AG04450 (cell line): ENCODE measurements at regions of chr12 and their contacts with region 1.

Region 1: DNA sequence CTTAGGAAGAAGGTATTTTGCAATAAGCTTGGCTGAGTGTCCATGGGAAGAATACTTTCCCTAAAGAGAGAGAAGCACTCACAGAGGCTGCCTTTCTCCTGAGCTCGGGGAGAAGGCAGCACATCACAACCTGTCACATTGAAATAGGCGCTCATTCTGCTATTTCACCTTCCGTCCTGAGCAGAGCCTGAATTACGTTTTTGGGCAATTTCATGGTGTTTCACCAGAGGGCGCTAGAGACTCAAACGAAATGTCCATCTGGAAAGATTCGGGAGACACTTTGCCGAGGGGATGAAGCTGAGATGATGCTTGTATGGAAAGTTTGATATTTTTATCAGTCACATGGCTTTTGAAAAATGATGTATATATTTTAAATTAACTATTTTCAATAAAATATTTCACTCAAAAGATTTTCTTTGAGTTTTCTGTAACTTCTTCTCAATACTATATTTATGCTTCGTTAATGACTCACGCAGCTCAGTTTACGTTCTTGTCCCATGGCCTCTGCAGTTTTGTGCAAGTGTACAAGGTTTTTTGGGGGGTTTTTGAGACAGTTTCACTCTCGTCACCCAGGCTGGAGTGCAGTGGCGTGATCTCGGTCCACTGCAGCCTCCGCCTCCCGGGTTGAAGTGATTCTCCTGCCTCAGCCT is 17.4 kb upstream of the B4GALNT3 start:
- DNase-seq: peak; percentile 6
- H3K4me3 ChIP-seq: no peak overlapping the region
- H3K27ac ChIP-seq: no peak overlapping the region
- H3K27me3 ChIP-seq: peaks cover under 1% of the 10 kb centered on the region
- CTCF ChIP-seq: peak; percentile 80

Region 2: DNA sequence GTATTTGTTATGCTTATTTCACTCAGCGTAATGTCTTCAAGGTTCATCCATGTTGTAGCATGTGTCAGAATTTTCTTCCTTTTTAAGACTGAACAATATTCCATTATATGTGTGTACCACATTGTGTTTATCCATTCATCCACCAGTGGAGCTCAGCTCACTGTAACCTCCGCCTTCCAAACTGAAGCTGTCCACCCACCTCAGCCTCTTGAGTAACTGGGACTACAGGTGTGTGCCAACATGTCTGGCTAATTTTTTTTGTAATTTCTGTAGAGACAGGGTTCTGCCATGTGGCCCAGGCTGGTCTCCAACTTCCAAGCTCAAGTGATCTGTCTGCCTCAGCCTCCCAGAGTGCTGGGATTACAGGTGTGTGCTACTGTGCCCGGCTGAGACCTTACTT is 19.8 kb before region 1 on chr12:
- CTCF ChIA-PET with region 1: interaction called, 15 read pairs
- POLR2A ChIA-PET with region 1: no interaction called
- DNase-seq: no peak
- H3K4me3 ChIP-seq: no peak overlapping the region
- H3K27ac ChIP-seq: no peak overlapping the region
- H3K27me3 ChIP-seq: no peaks in the 10 kb centered on the region
- CTCF ChIP-seq: no peak

Region 3: DNA sequence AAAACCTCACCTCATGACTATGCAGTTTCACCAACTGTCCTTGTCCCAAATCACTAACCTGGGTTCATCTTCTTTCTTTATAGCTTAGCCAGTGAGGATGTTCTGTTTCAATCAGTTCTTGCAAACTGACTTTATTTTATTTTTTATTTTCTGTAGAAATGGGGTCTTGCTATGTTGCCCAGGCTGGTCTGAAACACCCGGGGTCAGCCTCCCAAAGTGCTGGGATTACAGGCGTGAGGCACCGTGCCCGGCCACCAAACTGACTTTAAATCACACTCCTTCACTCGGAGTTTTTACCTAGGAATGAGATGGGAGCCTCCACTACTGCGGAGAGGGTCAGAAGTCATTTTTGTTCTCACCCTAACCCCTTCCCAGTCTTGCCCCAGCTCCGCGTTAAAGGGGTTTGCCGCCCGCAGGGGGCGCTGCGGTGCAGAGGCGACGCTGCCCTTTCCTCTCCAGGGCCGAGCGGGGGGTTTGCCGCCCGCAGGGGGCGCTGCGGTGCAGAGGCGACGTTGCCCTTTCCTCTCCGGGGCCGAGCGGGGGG is 10.4 kb after region 1 on chr12:
- CTCF ChIA-PET with region 1: interaction called, 58 read pairs
- POLR2A ChIA-PET with region 1: no interaction called
- DNase-seq: no peak
- H3K4me3 ChIP-seq: no peak overlapping the region
- H3K27ac ChIP-seq: no peak overlapping the region
- H3K27me3 ChIP-seq: peaks cover 37% of the 10 kb centered on the region
- CTCF ChIP-seq: peak; percentile 15; the same call in 1 of the 2 replicates

Region 4: DNA sequence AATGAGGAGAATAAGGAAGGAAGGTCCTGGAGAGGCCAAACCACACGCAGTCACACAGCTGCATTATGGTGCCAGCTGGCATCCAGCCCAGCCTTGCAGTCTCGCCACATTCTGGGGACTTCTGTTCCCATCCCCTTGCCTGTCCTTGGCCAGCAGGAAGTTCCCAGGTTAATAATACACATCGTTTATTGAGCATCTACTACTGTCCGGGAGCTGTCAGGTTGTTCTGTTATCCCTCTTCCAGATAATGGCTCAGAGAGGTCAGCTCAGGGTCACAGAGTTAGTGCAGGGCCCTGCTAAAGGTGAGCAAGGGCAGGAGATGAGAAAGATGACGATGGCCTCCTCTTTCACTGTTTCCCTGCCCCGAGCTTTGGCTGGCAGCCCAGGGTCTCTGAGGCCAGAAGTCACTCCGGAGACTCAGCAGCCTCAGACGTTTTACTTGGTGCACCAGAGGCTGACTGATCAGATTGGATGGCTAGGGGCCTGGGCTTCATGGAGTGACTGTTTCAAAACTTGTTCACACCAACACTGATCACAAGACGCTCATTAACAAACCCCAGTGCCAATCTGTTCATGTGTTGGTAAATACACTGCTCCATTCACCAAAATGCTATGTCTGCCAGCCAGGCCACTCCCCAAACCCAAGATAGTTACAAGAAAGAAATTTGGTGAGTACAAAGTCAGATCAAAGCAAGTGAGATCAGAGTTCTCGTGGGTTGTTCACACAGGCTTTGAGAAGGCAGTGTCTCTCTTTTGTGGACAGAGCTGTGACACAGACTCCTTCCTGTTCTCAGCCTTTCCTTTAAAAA is 96.6 kb after region 1 on chr12:
- CTCF ChIA-PET with region 1: interaction called, 36 read pairs
- POLR2A ChIA-PET with region 1: no interaction called
- DNase-seq: no peak
- H3K4me3 ChIP-seq: no peak overlapping the region
- H3K27ac ChIP-seq: no peak overlapping the region
- H3K27me3 ChIP-seq: peaks cover 27% of the 10 kb centered on the region
- CTCF ChIP-seq: no peak